Caco-2 (cell line): ENCODE measurements at regions of chr3 and their contacts with region 1.

Region 1: DNA sequence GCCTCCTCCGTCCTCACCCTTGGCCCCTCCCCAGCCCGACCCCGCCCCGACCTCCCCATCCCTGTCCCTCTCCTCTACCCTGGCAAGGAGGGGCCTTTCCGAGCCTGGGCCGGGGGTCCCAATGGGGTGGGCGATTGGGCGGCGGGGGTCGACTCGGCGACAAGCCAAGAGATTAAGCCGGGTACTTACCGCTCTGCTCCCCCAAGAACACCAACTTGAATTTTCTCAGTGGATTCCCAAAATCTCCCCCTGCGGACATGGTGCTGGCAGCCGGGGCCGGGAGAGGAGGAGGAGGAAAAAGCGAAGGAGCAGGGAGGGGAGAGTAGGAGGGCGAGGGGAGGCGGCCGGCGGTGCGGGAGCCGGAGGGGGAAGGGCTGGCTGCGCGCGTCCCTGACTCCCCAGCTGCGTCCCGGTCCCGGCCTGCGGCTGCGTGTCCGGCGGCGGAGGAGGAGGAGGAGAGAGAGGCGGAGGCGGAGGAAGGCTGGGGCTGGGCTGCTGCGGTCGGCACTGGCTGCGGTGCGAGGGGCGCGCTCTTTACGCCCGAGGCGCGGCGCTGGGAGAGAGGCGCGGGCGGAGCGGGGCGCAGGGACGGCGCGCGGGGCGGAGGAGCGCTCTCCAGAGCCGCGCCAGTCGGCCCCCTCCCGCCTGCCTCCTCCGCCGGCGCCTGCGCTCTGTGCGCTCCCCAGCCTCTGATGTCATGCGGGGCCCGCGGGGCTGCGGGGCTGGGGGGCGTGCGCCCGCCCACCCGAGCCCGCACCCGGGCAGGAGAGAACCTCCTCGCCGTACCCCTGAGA is at the start of gene RAB6B:
- DNase-seq: peak in 1 of 2 experiments; percentile 53
- H3K4me3 ChIP-seq: peak within 1 kb of the TSS; percentile 61
- H3K4me3 Mint-ChIP-seq: peak within 1 kb of the TSS; percentile 89
- H3K27ac Mint-ChIP-seq: no peak within 1 kb of the TSS
- H3K4me1 ChIP-seq: 0 out of 2 replicates have a peak, but pooled peaks cover 3% of the 10 kb centered on the region
- H3K4me1 Mint-ChIP-seq: no peaks in the 10 kb centered on the region
- H3K27me3 ChIP-seq: peaks cover 5% of the 10 kb centered on the region
- H3K27me3 Mint-ChIP-seq: peaks cover 18% of the 10 kb centered on the region
- CTCF ChIP-seq: no peak
- total RNA-seq, gene RAB6B: 2.5 and 3.2 TPM in 2 replicates

Region 2: DNA sequence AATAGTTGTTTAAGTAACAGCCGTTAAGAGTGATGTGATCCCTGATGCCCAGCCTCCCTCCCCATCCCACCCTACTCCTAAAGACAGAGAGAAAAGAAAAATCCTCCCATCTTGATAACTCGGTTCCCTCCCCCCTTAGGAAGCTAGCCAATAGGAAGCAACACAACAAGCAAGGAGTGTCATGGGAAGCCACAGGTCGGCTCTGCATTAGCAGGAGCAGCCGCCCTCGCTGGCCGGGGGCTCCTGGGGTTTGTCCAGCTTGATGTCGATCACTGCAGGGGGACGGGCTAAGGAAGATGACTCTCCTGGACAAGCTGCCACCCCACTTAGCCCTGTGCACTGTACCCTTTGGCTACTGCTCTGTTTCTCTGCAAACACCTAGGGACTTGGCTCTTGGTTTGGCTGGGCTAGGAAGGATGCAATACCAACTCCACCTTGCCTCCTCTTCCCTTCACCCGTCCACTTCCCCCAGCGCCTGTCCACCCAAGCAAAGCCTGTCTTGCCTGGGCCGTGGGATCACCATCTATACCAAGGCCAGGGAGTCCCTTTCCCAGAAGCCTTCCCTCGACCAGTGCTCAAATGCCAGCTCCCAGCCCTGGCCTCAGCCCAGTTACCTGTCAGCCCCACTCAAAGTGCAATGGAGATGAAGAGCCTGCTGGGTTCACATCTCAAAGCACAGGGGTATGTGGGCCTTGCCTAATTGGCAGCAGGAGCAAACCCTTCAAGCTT is 66.7 kb before region 1 on chr3:
- CTCF ChIA-PET with region 1: no interaction called
- POLR2A ChIA-PET with region 1: no interaction called
- intact Hi-C with region 1: loop called (anchors 5 kb)
- DNase-seq: no peak
- H3K4me3 ChIP-seq: no peak overlapping the region
- H3K4me3 Mint-ChIP-seq: no peak overlapping the region
- H3K27ac Mint-ChIP-seq: no peak overlapping the region
- H3K4me1 ChIP-seq: no peaks in the 10 kb centered on the region
- H3K4me1 Mint-ChIP-seq: no peaks in the 10 kb centered on the region
- H3K27me3 ChIP-seq: no peaks in the 10 kb centered on the region
- H3K27me3 Mint-ChIP-seq: no peaks in the 10 kb centered on the region
- CTCF ChIP-seq: no peak